ENCODE measurements at regions of chr7 and their contacts with region 1.

Region 1: DNA sequence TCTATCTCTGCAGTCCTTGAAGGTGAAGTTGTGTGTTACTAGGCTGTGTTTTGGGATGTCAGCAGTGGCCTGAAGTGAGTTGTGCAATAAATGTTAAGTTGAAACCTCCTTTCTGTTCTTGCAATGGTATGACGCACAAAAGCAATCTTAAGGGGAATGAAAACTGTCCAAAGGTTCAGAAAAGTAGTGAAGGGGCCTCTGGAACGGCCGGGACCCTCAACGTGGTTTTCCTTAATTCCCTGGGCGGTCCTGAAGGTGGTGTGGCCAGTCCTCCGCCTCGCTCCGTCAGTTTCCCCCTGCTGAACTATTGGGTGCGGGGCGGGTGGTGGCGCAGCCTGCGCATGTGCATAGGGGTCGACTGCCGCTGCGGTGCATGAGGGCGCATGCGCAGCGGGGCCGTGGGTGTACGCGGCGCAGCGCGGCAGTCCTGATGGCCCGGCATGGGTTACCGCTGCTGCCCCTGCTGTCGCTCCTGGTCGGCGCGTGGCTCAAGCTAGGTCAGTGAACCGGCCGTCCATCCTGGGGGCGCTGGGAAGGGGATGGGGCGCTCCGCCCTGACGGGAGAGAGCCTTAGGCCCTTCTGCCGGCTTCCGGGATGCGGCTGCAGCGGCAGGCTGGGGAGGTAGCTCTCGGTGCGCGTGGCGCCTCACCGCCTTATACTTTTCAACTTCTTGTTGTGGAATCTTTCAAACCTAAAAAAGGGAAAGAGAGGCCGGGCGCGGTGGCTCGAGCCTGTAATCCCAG is at the start of gene SUMF2:
- DNase-seq: peak; percentile 97
- H3K4me3 Mint-ChIP-seq: peak within 1 kb of the TSS; percentile 94
- H3K27ac Mint-ChIP-seq: peak within 1 kb of the TSS; percentile 96
- H3K4me1 Mint-ChIP-seq: peaks cover 34% of the 10 kb centered on the region
- H3K27me3 Mint-ChIP-seq: peaks cover 2% of the 10 kb centered on the region
- total RNA-seq, gene SUMF2: 154 and 161 TPM in 2 replicates

Region 2: GRCh38 chr7:56003749-56004148 is 60.3 kb before region 1 on chr7:
- intact Hi-C with region 1: loop called (anchors 2 kb)
- DNase-seq: no peak
- H3K4me3 Mint-ChIP-seq: no peak overlapping the region
- H3K27ac Mint-ChIP-seq: no peak overlapping the region
- H3K4me1 Mint-ChIP-seq: peaks cover 12% of the 10 kb centered on the region
- H3K27me3 Mint-ChIP-seq: no peaks in the 10 kb centered on the region

Region 3: GRCh38 chr7:56092789-56093531 is 28.9 kb after region 1 on chr7 and contains the start of gene PHKG1:
- intact Hi-C with region 1: no loop called
- DNase-seq: no peak
- H3K4me3 Mint-ChIP-seq: no peak within 1 kb of the TSS
- H3K27ac Mint-ChIP-seq: no peak within 1 kb of the TSS
- H3K4me1 Mint-ChIP-seq: peaks cover 2% of the 10 kb centered on the region
- H3K27me3 Mint-ChIP-seq: no peaks in the 10 kb centered on the region
- total RNA-seq, gene PHKG1: 2.8 and 5.0 TPM in 2 replicates

Region 4: GRCh38 chr7:56174810-56175760 is 111.0 kb after region 1 on chr7:
- intact Hi-C with region 1: no loop called
- DNase-seq: no peak
- H3K4me3 Mint-ChIP-seq: no peak overlapping the region
- H3K27ac Mint-ChIP-seq: no peak overlapping the region
- H3K4me1 Mint-ChIP-seq: no peaks in the 10 kb centered on the region
- H3K27me3 Mint-ChIP-seq: no peaks in the 10 kb centered on the region